HAP-1 (cell line): ENCODE measurements at regions of chr2 and their contacts with region 1.

Region 1: GRCh38 chr2:121088251-121089165 is 196.5 kb downstream of the TFCP2L1 start:
- DNase-seq: no peak
- H3K4me3 ChIP-seq: no peak overlapping the region
- H3K4me1 ChIP-seq: no peaks in the 10 kb centered on the region
- H3K27me3 ChIP-seq: peaks cover 5% of the 10 kb centered on the region; the same call in 1 of the 2 replicates

Region 2: DNA sequence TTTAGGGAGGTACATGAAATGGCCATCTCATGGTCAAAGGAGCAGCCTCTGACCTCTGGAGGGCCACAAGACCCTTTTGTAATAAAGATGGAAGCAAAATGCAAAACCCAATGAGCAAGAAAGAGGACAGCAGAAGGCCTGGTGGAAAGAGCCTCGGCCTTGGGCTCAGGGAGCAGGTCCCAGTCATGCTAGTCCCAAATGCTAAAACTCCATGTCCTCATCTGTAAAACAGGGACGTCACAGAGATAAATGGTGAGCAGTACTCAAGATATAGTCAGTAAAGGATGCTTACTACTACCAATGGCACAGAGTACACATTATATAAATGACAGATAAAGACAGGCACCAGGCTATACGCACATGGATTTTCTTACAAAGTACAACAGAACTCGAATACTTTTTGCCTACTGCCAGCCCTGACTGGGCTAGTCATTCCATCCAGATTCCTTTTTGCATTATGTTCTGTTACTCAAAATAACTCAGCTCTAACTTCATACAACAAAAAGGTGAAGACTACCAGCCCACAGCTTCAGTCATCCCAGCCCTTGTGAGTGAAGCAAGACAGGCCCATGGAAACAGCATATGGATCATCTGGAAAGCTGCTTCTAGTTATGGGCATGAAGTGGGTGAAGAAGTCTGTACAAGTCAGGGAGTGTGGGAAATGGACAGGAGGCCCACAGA is 261.4 kb after region 1 on chr2:
- in situ Hi-C with region 1: loop called (anchors 5 kb)
- DNase-seq: no peak
- H3K4me3 ChIP-seq: no peak overlapping the region
- H3K4me1 ChIP-seq: no peaks in the 10 kb centered on the region
- H3K27me3 ChIP-seq: no peaks in the 10 kb centered on the region

Region 3: GRCh38 chr2:121427187-121427689 is 338.7 kb after region 1 on chr2:
- in situ Hi-C with region 1: no loop called
- DNase-seq: peak; percentile 27 to 74
- H3K4me3 ChIP-seq: no peak overlapping the region
- H3K4me1 ChIP-seq: peaks cover 9% of the 10 kb centered on the region; the same call in 1 of the 2 replicates
- H3K27me3 ChIP-seq: no peaks in the 10 kb centered on the region